ENCODE measurements at regions of chr3 and their contacts with region 1.

Region 1: GRCh38 chr3:129195731-129196256 is 12.1 kb upstream of the CNBP start:
- DNase-seq: peak; percentile 82
- H3K4me3 ChIP-seq: peak overlapping the region in 1 of 3 experiments; percentile 23
- H3K27ac ChIP-seq: peak overlapping the region; percentile 81
- H3K4me1 ChIP-seq: peaks cover 26% of the 10 kb centered on the region
- H3K27me3 ChIP-seq: no peaks in the 10 kb centered on the region
- CTCF ChIP-seq: no peak
- POLR2A ChIP-seq: no peak

Region 2: GRCh38 chr3:129211772-129212171 is 16.0 kb after region 1 on chr3:
- CTCF ChIA-PET with region 1: interaction called, 12 read pairs
- POLR2A ChIA-PET with region 1: no interaction called
- dilution Hi-C with region 1: no loop called
- intact Hi-C with region 1: no loop called
- DNase-seq: peak; percentile 75
- H3K4me3 ChIP-seq: no peak overlapping the region
- H3K27ac ChIP-seq: no peak overlapping the region
- H3K4me1 ChIP-seq: peaks cover 8% of the 10 kb centered on the region
- H3K27me3 ChIP-seq: no peaks in the 10 kb centered on the region
- CTCF ChIP-seq: no peak
- POLR2A ChIP-seq: no peak

Region 3: GRCh38 chr3:129224984-129225393 is 29.2 kb after region 1 on chr3:
- CTCF ChIA-PET with region 1: interaction called, 13 read pairs
- POLR2A ChIA-PET with region 1: no interaction called
- dilution Hi-C with region 1: no loop called
- intact Hi-C with region 1: no loop called
- DNase-seq: peak; percentile 71
- H3K4me3 ChIP-seq: peak overlapping the region in 1 of 3 experiments; percentile 16
- H3K27ac ChIP-seq: peak overlapping the region; percentile 9
- H3K4me1 ChIP-seq: peaks cover 45% of the 10 kb centered on the region
- H3K27me3 ChIP-seq: no peaks in the 10 kb centered on the region
- CTCF ChIP-seq: no peak
- POLR2A ChIP-seq: no peak

Region 4: DNA sequence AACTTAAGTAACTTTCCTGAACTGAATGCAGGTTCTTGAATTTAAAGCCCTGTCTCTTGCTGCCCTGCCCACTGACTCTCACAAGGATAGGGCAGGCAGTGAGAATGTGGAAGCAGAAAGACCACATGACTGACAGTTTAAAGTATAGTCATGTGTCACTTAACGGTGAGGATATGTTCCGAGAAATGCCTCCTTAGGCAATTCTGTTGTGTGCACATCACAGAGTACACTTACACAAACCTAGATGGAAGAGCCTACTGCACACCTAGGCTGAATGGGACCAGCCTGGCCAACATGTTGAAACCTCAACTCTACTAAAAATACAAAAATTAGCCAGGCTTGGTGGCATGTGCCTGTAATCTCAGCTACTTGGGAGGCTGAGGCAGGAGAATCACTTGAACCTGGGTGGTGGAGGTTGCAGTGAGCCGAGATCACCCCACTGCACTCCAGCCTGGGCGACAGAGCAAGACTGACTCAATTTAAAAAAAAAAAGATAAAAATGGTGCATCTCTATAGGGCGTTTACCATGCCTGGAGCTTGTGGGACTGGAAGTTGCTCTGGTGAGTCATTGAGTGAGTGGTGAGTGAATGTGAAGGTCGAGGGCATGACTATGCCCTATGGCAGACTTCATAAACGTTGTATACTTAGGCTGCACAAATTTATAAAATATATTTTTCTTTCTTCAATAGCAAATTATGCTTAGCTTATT is 34.7 kb after region 1 on chr3:
- CTCF ChIA-PET with region 1: interaction called, 13 read pairs
- POLR2A ChIA-PET with region 1: no interaction called
- dilution Hi-C with region 1: no loop called
- intact Hi-C with region 1: no loop called
- DNase-seq: peak; percentile 46
- H3K4me3 ChIP-seq: no peak overlapping the region
- H3K27ac ChIP-seq: no peak overlapping the region
- H3K4me1 ChIP-seq: peaks cover 35% of the 10 kb centered on the region
- H3K27me3 ChIP-seq: no peaks in the 10 kb centered on the region
- CTCF ChIP-seq: no peak
- POLR2A ChIP-seq: no peak